Thyroid gland (tissue), 4 donors: ENCODE measurements at regions of chr10 and their contacts with region 1.

Region 1: GRCh38 chr10:95820363-95820762 is 64.4 kb downstream of the ENTPD1 start:
- DNase-seq: no peak
- H3K4me3 ChIP-seq: no peak overlapping the region
- H3K27ac ChIP-seq: no peak overlapping the region
- H3K4me1 ChIP-seq: peaks cover 5 to 31% of the 10 kb centered on the region in 2 donors
- H3K27me3 ChIP-seq: no peaks in the 10 kb centered on the region
- CTCF ChIP-seq: no peak
- POLR2A ChIP-seq: no peak

Region 2: DNA sequence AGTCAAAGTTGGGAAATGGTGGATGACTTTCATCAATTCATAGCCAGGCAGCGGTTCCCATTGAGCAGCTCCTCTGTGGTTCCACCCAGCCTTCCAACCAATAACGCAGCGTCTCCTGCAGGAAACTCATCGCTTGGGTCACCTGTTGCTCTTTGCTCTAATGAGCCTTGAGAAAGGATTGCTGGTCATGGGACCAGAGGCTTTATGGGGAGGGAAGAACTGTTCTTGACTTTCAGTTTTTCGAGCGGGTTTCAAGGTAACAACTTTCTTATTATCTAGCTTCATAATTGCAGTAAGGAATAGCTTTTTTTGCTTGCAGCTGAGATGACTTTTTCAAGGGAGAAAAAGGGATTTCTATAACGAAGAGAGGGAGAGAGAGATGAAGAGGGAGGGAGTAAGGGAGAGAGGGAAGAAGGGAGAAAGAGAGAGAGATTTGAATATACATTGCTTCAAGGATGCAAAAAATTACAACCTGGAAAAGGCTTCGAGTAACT is 64.8 kb before region 1 on chr10:
- intact Hi-C with region 1: loop called (anchors 10 kb)
- DNase-seq: peak; percentile 29 to 42
- H3K4me3 ChIP-seq: peak overlapping the region in 1 of 3 donors; percentile 16
- H3K27ac ChIP-seq: peak overlapping the region; percentile 18 to 70 (median 24)
- H3K4me1 ChIP-seq: peaks cover 0 to 4% of the 10 kb centered on the region in 2 donors
- H3K27me3 ChIP-seq: no peaks in the 10 kb centered on the region
- CTCF ChIP-seq: no peak
- POLR2A ChIP-seq: peak in 1 of 2 donors; percentile 33